ENCODE measurements at regions of chr6 and their contacts with region 1.

Region 1: GRCh38 chr6:7112741-7113313 is 5.1 kb downstream of the RREB1 start:
- DNase-seq: peak in 4 of 5 donors; percentile 29 to 56 (median 33)
- ATAC-seq: peak in 3 of 4 donors; percentile 26 to 35 (median 30)
- H3K4me3 ChIP-seq: peak overlapping the region in 6 of 12 donors; percentile 3 to 13 (median 6)
- H3K27ac ChIP-seq: peak overlapping the region in 8 of 12 donors; percentile 27 to 98 (median 60)
- H3K4me1 ChIP-seq: peaks cover 4 to 85% (median 60%) of the 10 kb centered on the region in 12 donors
- H3K27me3 ChIP-seq: no peaks in the 10 kb centered on the region
- CTCF ChIP-seq: no peak
- POLR2A ChIP-seq: no peak

Region 2: DNA sequence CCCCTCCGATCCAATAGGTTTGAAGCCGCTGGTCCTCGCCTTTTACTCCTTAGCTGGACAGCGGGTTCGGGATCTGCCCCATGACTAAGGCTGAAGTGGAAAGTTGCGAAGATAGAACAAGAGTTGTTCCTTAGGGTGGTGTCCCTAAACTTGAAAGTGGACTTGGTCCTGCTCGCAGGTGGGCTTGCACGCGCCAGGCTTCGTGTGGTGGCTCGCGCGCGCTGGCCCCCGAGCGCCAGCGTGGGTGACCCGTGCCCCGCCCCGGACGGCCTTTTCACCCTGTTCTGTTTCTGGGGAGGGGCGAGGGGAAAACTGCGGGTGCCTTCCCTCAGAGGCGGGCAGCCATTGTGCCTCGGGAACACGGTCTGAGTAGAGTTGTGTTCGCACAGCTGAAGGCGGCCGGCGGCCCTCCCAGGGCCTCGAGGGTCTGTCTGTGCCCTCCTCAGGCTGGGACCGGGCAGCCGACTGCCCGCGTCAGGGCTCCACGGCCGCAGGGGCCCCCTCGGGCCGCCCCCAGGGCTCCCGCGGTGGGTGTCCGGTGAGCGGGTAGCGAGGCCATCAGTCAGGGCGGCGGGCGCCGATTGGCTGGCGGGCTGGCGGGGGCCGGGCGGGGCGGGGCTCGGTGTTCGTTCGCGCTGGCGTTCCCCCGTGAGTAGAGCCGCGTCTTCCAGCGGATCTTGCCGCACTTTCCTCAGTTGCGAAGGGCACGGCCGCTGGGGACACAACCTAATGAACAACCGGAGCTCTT is 28.0 kb after region 1 on chr6:
- intact Hi-C with region 1: loop called in 6 of 10 experiments (anchors 2 to 5 kb)
- DNase-seq: peak; percentile 92 to 94 (median 92)
- ATAC-seq: peak; percentile 82 to 97 (median 95)
- H3K4me3 ChIP-seq: peak overlapping the region; percentile 22 to 83 (median 67)
- H3K27ac ChIP-seq: peak overlapping the region; percentile 87 to 96 (median 94)
- H3K4me1 ChIP-seq: peaks cover 4 to 90% (median 66%) of the 10 kb centered on the region in 12 donors
- H3K27me3 ChIP-seq: no peaks in the 10 kb centered on the region
- CTCF ChIP-seq: no peak
- POLR2A ChIP-seq: peak in 1 of 2 donors; percentile 87

Region 3: GRCh38 chr6:7219310-7219709 is 106.5 kb after region 1 on chr6:
- intact Hi-C with region 1: loop called in 6 of 10 experiments (anchors 5 to 10 kb)
- DNase-seq: peak in 1 of 5 donors; percentile 57
- ATAC-seq: peak in 3 of 4 donors; percentile 16 to 29 (median 28)
- H3K4me3 ChIP-seq: no peak overlapping the region
- H3K27ac ChIP-seq: peak overlapping the region in 11 of 12 donors; percentile 24 to 77 (median 64)
- H3K4me1 ChIP-seq: peaks cover 4 to 75% (median 59%) of the 10 kb centered on the region in 12 donors
- H3K27me3 ChIP-seq: no peaks in the 10 kb centered on the region
- CTCF ChIP-seq: no peak
- POLR2A ChIP-seq: no peak

Region 4: DNA sequence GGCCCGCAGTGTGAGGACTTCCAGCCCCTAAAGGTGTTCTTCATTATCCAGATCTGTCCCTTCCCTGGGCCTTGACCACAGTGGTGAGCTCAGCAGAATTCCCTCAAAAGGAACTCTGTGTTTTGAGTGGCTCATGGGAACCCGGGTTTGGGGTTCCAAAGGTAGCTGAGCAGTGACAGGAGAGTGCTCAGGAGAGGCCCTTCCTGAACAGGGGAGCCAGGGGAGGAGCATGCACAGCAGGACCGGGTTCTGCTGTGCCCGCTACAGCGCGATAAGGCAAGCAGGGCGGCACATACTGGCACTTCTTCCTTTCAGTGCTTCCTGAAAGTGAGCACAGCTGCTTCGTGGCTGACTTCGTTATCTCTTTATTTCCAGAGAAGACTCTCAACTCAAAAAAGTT is 111.9 kb after region 1 on chr6:
- intact Hi-C with region 1: loop called in 6 of 10 experiments (anchors 5 to 10 kb)
- DNase-seq: peak in 1 of 5 donors; percentile 76
- ATAC-seq: peak; percentile 55 to 87 (median 74)
- H3K4me3 ChIP-seq: no peak overlapping the region
- H3K27ac ChIP-seq: peak overlapping the region in 11 of 12 donors; percentile 15 to 85 (median 45)
- H3K4me1 ChIP-seq: peaks cover 4 to 42% (median 35%) of the 10 kb centered on the region in 12 donors
- H3K27me3 ChIP-seq: no peaks in the 10 kb centered on the region
- CTCF ChIP-seq: no peak
- POLR2A ChIP-seq: no peak

Measured in heart left ventricle (tissue), 16 donors.